ENCODE measurements at regions of chr17 and their contacts with region 1.

Region 1: GRCh38 chr17:7811251-7811650 is 22.8 kb upstream of the KDM6B start:
- DNase-seq: no peak
- H3K4me3 ChIP-seq: no peak overlapping the region
- H3K27ac ChIP-seq: no peak overlapping the region
- H3K27me3 ChIP-seq: peaks cover 4% of the 10 kb centered on the region
- CTCF ChIP-seq: no peak

Region 2: GRCh38 chr17:7825206-7825990 is 14.1 kb after region 1 on chr17:
- CTCF ChIA-PET with region 1: interaction called, 10 read pairs
- POLR2A ChIA-PET with region 1: interaction called, 3 read pairs
- DNase-seq: no peak
- H3K4me3 ChIP-seq: no peak overlapping the region
- H3K27ac ChIP-seq: no peak overlapping the region
- H3K27me3 ChIP-seq: peaks cover 9% of the 10 kb centered on the region
- CTCF ChIP-seq: no peak

Region 3: DNA sequence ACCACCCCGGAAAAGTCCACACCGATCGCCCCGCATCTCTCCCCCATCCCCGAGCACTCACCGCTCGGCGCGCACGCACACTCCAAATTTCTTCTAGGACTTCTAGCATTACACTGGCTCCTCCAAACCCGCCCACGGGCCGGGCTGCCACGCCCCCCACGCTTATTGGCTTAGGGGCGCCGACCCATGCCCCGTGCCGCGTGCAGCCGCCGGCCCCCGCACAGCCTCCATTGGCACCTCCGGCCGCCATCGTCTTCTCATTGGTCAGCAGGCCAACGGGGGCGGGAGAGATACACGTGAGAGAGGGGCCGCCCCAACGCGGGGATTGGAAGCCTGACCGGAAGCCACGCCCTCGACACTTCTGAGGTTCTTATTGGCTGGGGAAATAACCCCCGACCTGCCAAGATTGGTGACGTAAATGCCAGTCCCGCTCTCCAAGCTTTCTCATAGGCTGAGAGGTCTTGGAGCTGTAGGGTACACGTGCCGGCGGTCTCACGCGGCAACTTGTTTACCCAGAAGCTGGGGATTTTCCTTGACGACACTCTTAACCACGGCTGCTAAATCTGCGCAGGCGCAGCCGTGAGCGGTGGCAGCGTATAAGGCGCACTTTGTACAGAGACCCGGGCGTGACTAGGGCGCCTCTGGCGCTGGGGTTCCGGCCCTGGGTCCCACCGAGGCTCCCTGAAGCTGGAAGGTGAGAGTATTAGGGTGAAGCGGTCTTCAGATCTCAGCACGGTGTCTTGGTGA is 345.2 kb after region 1 on chr17:
- CTCF ChIA-PET with region 1: no interaction called
- POLR2A ChIA-PET with region 1: no interaction called
- DNase-seq: peak; percentile 100
- H3K4me3 ChIP-seq: peak overlapping the region; percentile 72
- H3K27ac ChIP-seq: peak overlapping the region; percentile 97
- H3K27me3 ChIP-seq: no peaks in the 10 kb centered on the region
- CTCF ChIP-seq: no peak